ENCODE measurements at regions of chr14 and their contacts with region 1.

Region 1: GRCh38 chr14:21014761-21015190 is 10.1 kb downstream of the NDRG2 start:
- DNase-seq: peak; percentile 95
- H3K4me3 ChIP-seq: no peak overlapping the region
- H3K27ac ChIP-seq: no peak overlapping the region
- H3K4me1 ChIP-seq: no peaks in the 10 kb centered on the region
- H3K27me3 ChIP-seq: no peaks in the 10 kb centered on the region
- CTCF ChIP-seq: peak; percentile 86

Region 2: GRCh38 chr14:21039585-21040369 is 25.0 kb after region 1 on chr14:
- intact Hi-C with region 1: loop called (anchors 2 kb)
- DNase-seq: peak; percentile 62
- H3K4me3 ChIP-seq: no peak overlapping the region
- H3K27ac ChIP-seq: peak overlapping the region; percentile 69
- H3K4me1 ChIP-seq: peaks cover 6% of the 10 kb centered on the region
- H3K27me3 ChIP-seq: no peaks in the 10 kb centered on the region
- CTCF ChIP-seq: peak; percentile 59

Region 3: DNA sequence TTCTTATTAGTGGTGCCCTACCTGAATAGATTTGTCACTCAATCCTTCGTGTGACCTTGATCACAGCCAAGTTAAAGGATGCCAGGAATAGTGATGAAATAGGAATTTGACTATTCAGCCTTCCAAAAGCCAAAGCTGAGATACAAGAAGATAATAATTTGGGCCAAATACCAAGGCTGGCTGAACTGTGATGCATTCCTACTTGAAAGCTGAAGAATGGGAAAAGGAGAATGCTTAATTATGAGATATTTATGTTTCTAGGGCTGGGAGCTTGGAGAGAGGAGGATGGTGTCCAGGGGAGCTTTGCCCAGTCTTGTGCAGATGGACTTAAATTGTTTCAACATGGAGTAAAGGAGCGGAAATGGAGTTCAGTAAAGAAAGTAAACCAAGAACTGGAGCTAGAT is 32.6 kb after region 1 on chr14:
- intact Hi-C with region 1: loop called (anchors 2 kb)
- DNase-seq: no peak
- H3K4me3 ChIP-seq: no peak overlapping the region
- H3K27ac ChIP-seq: no peak overlapping the region
- H3K4me1 ChIP-seq: no peaks in the 10 kb centered on the region
- H3K27me3 ChIP-seq: no peaks in the 10 kb centered on the region
- CTCF ChIP-seq: no peak

Region 4: DNA sequence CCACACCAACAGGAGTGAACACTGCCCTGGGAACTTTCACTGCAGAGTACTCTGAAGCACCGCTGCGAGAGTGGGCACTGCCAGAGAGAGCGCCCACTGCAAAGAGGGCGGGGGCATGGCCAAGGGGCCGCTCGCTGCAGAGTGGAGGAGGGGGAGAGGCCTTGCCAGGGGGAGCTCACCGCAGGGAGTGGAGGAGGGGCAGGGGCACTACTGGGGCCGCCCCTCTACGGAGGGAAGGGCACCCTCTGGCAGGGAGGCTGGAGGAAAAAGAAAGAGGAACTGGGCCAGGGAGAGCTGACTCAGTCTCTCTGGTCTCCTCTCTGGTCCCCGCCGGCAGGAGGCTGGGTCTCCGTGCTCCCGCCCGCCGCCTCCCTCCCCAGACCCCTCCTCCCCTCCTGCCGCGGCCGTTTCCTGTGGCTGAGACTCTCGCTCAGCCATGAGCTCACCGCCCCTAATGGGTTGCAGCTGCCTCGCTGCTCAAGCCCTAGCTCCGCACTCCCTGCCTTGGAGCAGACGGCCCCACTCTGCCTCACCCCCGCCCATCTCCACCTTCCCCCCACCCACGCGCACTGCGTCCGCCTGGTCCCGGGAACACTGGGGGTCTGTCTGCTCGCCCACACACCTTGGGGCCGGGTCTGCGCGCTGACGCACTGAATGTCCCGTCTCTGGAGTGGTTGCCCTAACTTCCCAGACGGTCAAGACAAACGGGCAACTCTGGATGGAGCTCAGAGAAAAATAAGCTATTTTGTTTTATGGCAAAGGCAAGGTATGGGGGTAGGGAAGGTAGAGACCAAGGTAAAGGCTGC is 56.7 kb after region 1 on chr14:
- intact Hi-C with region 1: no loop called
- DNase-seq: peak; percentile 86
- H3K4me3 ChIP-seq: peak overlapping the region; percentile 68
- H3K27ac ChIP-seq: peak overlapping the region; percentile 90
- H3K4me1 ChIP-seq: peaks cover 14% of the 10 kb centered on the region
- H3K27me3 ChIP-seq: no peaks in the 10 kb centered on the region
- CTCF ChIP-seq: no peak

Region 5: GRCh38 chr14:21092273-21093011 is 77.7 kb after region 1 on chr14:
- intact Hi-C with region 1: loop called (anchors 5 kb)
- DNase-seq: peak; percentile 90
- H3K4me3 ChIP-seq: no peak overlapping the region
- H3K27ac ChIP-seq: no peak overlapping the region
- H3K4me1 ChIP-seq: peaks cover 4% of the 10 kb centered on the region
- H3K27me3 ChIP-seq: no peaks in the 10 kb centered on the region
- CTCF ChIP-seq: peak; percentile 100